CD4-positive, alpha-beta memory T cell (primary cell): ENCODE measurements at regions of chr13 and their contacts with region 1.

Region 1: GRCh38 chr13:41019011-41019487 is at the start of gene ELF1:
- DNase-seq: peak; percentile 74 to 89 (median 80)
- H3K4me3 ChIP-seq: peak within 1 kb of the TSS; percentile 65 to 72
- H3K4me3 Mint-ChIP-seq: peak within 1 kb of the TSS; percentile 83 to 98 (median 95)
- H3K27ac ChIP-seq: peak within 1 kb of the TSS; percentile 85
- H3K27ac Mint-ChIP-seq: peak within 1 kb of the TSS; percentile 90 to 99 (median 96)
- H3K4me1 ChIP-seq: peaks cover 34% of the 10 kb centered on the region
- H3K4me1 Mint-ChIP-seq: peaks cover 26 to 39% (median 33%) of the 10 kb centered on the region in 4 donors
- H3K27me3 ChIP-seq: no peaks in the 10 kb centered on the region
- H3K27me3 Mint-ChIP-seq: no peaks in the 10 kb centered on the region
- total RNA-seq, gene ELF1: 188 to 192 TPM

Region 2: GRCh38 chr13:40961214-40961613 is 57.8 kb before region 1 on chr13:
- CTCF ChIA-PET with region 1: no interaction called
- POLR2A ChIA-PET with region 1: interaction called, 226 read pairs
- intact Hi-C with region 1: no loop called
- DNase-seq: no peak
- H3K4me3 ChIP-seq: no peak overlapping the region
- H3K4me3 Mint-ChIP-seq: peak overlapping the region in 6 of 8 donors; percentile 52 to 79 (median 68)
- H3K27ac ChIP-seq: no peak overlapping the region
- H3K27ac Mint-ChIP-seq: peak overlapping the region in 6 of 7 donors; percentile 9 to 88 (median 50)
- H3K4me1 ChIP-seq: peaks cover 68% of the 10 kb centered on the region
- H3K4me1 Mint-ChIP-seq: peaks cover 59 to 88% (median 72%) of the 10 kb centered on the region in 4 donors
- H3K27me3 ChIP-seq: no peaks in the 10 kb centered on the region
- H3K27me3 Mint-ChIP-seq: no peaks in the 10 kb centered on the region

Region 3: DNA sequence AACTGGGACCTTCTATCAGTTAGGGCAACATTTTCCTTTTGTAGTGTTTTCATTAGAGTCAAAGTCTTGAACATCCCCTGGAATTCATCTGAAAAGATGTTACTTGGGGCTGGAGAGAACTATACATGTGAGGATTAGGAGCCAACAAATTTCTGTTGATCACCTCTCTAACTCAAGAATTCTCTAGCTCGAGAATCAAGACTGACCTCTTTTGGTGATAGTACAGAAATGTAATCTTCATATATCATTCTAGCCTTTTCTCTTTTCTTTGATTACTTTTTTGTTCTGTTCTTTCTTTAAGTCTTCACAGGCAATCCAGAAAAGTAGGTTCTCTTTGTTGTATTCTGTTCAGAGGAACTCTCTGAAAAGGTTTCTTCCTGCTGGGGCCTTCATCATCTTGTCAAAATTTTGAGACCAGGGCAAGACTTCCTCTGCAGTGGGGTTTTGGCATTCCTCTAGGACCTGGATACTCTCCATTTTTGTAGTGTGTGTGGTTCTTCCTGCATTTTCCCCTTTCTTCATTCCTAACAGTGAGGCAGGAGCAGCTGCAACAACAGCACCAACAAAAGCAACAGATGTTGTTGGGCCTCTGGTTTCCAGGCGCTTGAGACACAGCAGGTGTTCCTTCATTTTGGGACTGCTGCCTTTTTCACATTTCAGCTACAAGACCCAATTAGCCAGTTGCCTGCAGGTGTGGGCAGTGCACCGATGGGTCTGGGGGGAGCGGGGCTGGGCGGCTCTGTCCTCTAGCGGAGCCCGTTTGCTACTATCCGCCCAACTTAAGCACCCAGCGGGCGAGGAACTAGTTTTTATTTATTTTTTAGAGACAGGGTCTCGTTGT is 26.2 kb before region 1 on chr13:
- CTCF ChIA-PET with region 1: interaction called, 6 read pairs
- POLR2A ChIA-PET with region 1: interaction called, 48 read pairs
- intact Hi-C with region 1: no loop called
- DNase-seq: no peak
- H3K4me3 ChIP-seq: no peak overlapping the region
- H3K4me3 Mint-ChIP-seq: peak overlapping the region in 6 of 8 donors; percentile 9 to 65 (median 35)
- H3K27ac ChIP-seq: peak overlapping the region; percentile 41
- H3K27ac Mint-ChIP-seq: peak overlapping the region; percentile 65 to 94 (median 85)
- H3K4me1 ChIP-seq: peaks cover 93% of the 10 kb centered on the region
- H3K4me1 Mint-ChIP-seq: peaks cover 54 to 87% (median 69%) of the 10 kb centered on the region in 4 donors
- H3K27me3 ChIP-seq: no peaks in the 10 kb centered on the region
- H3K27me3 Mint-ChIP-seq: no peaks in the 10 kb centered on the region

Region 4: DNA sequence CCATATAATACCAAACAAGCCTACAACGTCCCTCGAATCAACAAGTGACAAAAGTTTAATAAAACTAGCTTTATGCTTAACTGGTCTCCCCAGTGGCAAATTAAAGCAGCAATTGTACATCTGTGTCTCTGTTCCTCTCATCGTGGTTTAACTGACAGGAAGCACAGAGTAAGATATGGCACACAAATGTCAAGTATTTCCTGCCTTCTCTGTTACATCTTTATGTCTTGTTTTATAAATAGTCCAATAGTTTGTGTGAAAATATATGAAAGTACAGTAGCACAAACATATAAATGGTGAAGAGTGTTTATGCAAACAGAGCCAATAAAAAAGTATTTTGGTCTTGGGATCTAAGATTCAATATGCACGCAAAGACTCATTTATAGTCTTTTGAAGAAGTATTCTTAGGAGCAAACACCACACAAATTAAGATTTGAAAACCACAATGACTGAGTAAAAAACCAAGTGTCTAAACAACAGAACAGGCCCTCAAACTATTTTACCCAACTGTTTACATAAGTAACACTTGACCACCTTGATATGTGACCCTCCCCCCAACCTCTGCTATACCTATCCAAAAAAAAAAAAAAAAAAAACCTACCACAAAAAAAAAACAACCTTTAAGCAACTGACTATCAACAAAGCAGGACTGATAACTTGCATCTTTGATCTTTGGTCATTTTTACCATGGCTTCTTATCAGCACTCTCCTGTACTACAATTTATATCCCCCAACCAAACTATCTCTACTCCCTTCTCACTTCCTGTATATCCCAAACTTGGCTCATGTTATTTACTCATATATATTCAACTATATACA is 14.0 kb before region 1 on chr13:
- CTCF ChIA-PET with region 1: interaction called, 16 read pairs
- POLR2A ChIA-PET with region 1: interaction called, 62 read pairs
- intact Hi-C with region 1: loop called (anchors 1 kb)
- DNase-seq: peak; percentile 52 to 72 (median 64)
- H3K4me3 ChIP-seq: peak overlapping the region in 1 of 2 donors; percentile 7
- H3K4me3 Mint-ChIP-seq: peak overlapping the region; percentile 38 to 87 (median 62)
- H3K27ac ChIP-seq: peak overlapping the region; percentile 59
- H3K27ac Mint-ChIP-seq: peak overlapping the region; percentile 73 to 94 (median 90)
- H3K4me1 ChIP-seq: peaks cover 93% of the 10 kb centered on the region
- H3K4me1 Mint-ChIP-seq: peaks cover 49 to 79% (median 60%) of the 10 kb centered on the region in 4 donors
- H3K27me3 ChIP-seq: no peaks in the 10 kb centered on the region
- H3K27me3 Mint-ChIP-seq: no peaks in the 10 kb centered on the region